A673 (cell line): ENCODE measurements at regions of chr3 and their contacts with region 1.

Region 1: GRCh38 chr3:181363205-181363604 is 348.5 kb upstream of the SOX2 start:
- DNase-seq: no peak
- H3K4me3 ChIP-seq: no peak overlapping the region
- H3K27ac ChIP-seq: no peak overlapping the region
- H3K4me1 ChIP-seq: no peaks in the 10 kb centered on the region
- H3K27me3 ChIP-seq: peaks cover 7% of the 10 kb centered on the region
- CTCF ChIP-seq: no peak

Region 2: DNA sequence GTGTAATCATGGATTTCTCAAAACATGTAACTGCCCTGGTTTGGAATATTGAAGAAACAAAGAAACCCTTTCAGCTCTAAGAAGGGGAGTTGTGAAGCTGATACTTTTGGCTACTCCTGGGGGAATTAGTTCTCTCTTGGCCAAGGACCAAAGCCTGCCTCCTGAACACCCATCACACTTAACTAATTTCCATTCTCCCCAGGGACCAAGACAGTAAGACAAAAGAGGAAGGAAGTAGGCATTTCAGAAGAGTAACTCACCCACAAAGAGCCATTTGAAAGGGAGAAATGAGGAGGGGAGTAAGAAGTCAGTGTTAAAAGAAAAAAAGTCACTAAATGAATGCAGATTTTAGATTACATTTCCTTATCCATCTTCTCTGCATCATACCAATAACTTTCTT is 20.6 kb after region 1 on chr3:
- CTCF ChIA-PET with region 1: no interaction called
- POLR2A ChIA-PET with region 1: no interaction called
- intact Hi-C with region 1: loop called (anchors 1 kb)
- DNase-seq: peak; percentile 97
- H3K4me3 ChIP-seq: no peak overlapping the region
- H3K27ac ChIP-seq: peak overlapping the region; percentile 57
- H3K4me1 ChIP-seq: peaks cover 24% of the 10 kb centered on the region
- H3K27me3 ChIP-seq: no peaks in the 10 kb centered on the region
- CTCF ChIP-seq: no peak

Region 3: DNA sequence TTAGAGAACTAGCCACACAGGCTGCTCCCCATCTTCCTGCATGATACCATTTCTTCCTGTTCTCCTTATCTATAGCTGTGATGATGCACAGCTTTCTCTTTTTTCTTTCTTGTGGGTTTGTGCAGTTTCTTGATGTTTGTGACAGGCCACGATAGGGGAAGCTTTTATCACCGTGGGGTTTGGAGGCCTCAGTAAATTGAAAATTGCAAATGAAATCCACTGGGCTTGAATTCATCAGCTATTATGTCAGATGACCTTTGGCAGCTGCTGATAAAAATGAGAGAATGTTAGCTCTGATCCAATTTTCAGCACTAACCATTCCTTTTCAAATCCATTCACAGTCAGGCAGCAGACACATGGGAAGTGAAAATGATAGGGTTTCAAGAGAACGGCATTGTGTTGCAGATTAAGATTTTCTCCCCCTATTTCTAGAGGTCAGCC is 171.6 kb after region 1 on chr3:
- CTCF ChIA-PET with region 1: no interaction called
- POLR2A ChIA-PET with region 1: no interaction called
- intact Hi-C with region 1: no loop called
- DNase-seq: no peak
- H3K4me3 ChIP-seq: no peak overlapping the region
- H3K27ac ChIP-seq: no peak overlapping the region
- H3K4me1 ChIP-seq: no peaks in the 10 kb centered on the region
- H3K27me3 ChIP-seq: peaks cover 20% of the 10 kb centered on the region
- CTCF ChIP-seq: no peak